GM12878 (cell line): ENCODE measurements at regions of chr15 and their contacts with region 1.

Region 1: GRCh38 chr15:48975472-48976419 is 12.0 kb upstream of the SHC4 start:
- DNase-seq: no peak
- ATAC-seq: peak; percentile 99
- H3K4me3 ChIP-seq: peak overlapping the region; percentile 52; the same call in 1 of the 2 replicates
- H3K27ac ChIP-seq: no peak overlapping the region
- H3K4me1 ChIP-seq: no peaks in the 10 kb centered on the region
- H3K27me3 ChIP-seq: no peaks in the 10 kb centered on the region
- CTCF ChIP-seq: peak; percentile 74 to 93 (median 76)
- EP300 ChIP-seq: no peak
- POLR2A ChIP-seq: peak; percentile 23; the same call in 1 of the 2 replicates
- RAD21 ChIP-seq: peak; percentile 54

Region 2: DNA sequence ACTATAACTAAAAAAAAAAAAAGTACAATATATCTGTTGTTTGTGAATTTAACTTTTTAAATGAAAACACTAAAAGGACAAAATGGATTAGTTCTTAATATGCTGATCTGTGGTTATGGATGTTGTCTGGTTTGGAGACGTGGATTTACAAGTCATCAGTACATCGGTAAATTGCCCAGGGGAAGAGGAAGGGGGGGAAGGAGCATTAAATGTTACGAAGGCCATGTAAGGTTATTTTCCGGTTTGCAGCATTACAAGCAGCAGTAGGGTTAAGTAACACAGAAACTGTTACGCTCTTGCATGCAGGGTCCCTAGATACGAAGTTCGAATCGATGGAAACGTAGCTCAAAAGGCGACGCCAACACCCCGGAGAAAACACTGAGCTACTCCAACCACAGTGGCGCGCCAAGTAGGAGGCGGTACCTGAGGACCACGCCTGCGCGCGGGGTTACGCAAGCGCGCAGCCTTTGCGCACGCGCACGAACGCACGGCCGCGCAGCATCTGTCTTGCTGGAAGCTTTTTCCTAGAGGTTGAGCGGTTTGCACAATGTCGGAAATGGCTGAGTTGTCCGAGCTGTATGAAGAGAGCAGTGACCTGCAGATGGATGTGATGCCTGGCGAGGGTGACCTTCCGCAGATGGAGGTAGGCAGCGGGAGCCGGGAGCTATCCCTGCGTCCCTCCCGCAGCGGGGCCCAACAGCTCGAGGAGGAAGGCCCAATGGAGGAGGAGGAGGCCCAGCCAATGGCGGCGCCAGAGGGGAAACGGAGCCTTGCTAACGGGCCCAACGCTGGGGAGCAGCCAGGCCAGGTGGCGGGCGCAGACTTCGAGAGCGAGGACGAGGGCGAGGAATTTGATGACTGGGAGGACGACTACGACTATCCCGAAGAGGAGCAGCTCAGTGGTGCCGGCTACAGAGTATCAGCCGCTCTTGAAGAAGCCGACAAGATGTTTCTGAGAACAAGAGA is 97.8 kb before region 1 on chr15 and contains the start of gene EID1:
- CTCF ChIA-PET with region 1: interaction called, 38 read pairs
- POLR2A ChIA-PET with region 1: interaction called, 7 read pairs
- RAD21 ChIA-PET with region 1: interaction called, 25 read pairs
- SMC1A ChIA-PET with region 1: interaction called, 14 read pairs
- in situ Hi-C with region 1: no loop called
- intact Hi-C with region 1: no loop called
- DNase-seq: peak; percentile 87
- ATAC-seq: peak; percentile 94
- H3K4me3 ChIP-seq: peak within 1 kb of the TSS; percentile 67
- H3K27ac ChIP-seq: peak within 1 kb of the TSS; percentile 85
- H3K4me1 ChIP-seq: peaks cover 4% of the 10 kb centered on the region
- H3K27me3 ChIP-seq: no peaks in the 10 kb centered on the region
- CTCF ChIP-seq: no peak
- EP300 ChIP-seq: peak in 1 of 2 experiments; percentile 40; a peak in 1 of 4 replicates
- POLR2A ChIP-seq: peak; percentile 98
- RAD21 ChIP-seq: no peak
- polyA plus RNA-seq, gene EID1: 45.6 to 79.5 TPM

Region 3: DNA sequence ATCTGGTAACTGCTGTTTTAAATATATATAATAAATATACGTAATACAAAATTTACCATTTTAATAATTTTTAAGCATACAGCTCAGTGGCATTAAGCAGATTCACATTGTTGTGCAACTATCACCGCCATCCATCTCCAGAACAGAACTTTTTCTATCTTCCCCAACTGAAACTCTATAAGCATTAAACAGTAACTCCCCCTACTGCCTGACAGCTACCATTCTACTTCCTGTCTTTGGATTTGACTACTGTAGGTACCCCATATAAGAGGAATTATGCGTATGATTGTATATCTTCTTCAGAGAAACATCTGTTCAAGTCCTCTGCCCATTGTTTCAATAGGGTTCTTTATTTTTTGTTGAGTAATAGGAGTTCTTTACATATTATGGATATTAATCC is 61.0 kb before region 1 on chr15:
- CTCF ChIA-PET with region 1: interaction called, 7 read pairs
- POLR2A ChIA-PET with region 1: no interaction called
- RAD21 ChIA-PET with region 1: interaction called, 3 read pairs
- SMC1A ChIA-PET with region 1: interaction called, 4 read pairs
- in situ Hi-C with region 1: no loop called
- intact Hi-C with region 1: loop called (anchors 5 kb)
- DNase-seq: no peak
- ATAC-seq: 0 out of 3 replicates have a peak, but pooled peaks have one; percentile 22
- H3K4me3 ChIP-seq: no peak overlapping the region
- H3K27ac ChIP-seq: no peak overlapping the region
- H3K4me1 ChIP-seq: no peaks in the 10 kb centered on the region
- H3K27me3 ChIP-seq: no peaks in the 10 kb centered on the region
- CTCF ChIP-seq: no peak; a peak in 1 of 6 replicates
- EP300 ChIP-seq: no peak
- POLR2A ChIP-seq: no peak
- RAD21 ChIP-seq: no peak

Region 4: DNA sequence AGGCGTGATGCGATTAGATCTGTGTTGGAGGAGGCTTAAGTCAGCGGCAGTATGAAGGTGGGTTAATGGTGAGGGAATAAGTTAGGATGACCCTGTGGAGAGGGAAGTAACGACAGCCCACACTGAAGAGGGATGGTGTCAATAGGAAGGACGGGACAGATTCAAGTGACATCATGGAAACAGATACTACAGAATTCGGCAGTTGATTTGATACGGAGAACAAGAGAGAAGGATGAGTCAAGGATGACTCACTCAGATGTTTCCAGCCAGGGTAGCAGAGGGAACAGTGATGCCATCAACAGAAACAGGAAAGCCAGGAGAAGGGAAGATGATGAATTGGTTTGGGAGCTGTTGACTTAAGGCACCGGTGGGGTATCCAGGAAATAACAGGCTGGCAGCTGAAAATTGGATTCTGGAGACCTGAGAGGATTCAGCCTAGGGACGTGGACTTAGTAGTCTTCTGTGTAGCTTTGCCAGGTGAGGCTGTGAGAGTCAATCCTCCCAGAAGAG is 50.0 kb before region 1 on chr15:
- CTCF ChIA-PET with region 1: interaction called, 10 read pairs
- POLR2A ChIA-PET with region 1: no interaction called
- RAD21 ChIA-PET with region 1: interaction called, 3 read pairs
- SMC1A ChIA-PET with region 1: interaction called, 8 read pairs
- in situ Hi-C with region 1: no loop called
- intact Hi-C with region 1: no loop called
- DNase-seq: no peak
- ATAC-seq: no peak
- H3K4me3 ChIP-seq: no peak overlapping the region
- H3K27ac ChIP-seq: no peak overlapping the region
- H3K4me1 ChIP-seq: no peaks in the 10 kb centered on the region
- H3K27me3 ChIP-seq: no peaks in the 10 kb centered on the region
- CTCF ChIP-seq: no peak
- EP300 ChIP-seq: no peak
- POLR2A ChIP-seq: no peak
- RAD21 ChIP-seq: no peak

Region 5: GRCh38 chr15:48946088-48946839 is 29.5 kb before region 1 on chr15:
- CTCF ChIA-PET with region 1: interaction called, 21 read pairs
- POLR2A ChIA-PET with region 1: no interaction called
- RAD21 ChIA-PET with region 1: interaction called, 4 read pairs
- SMC1A ChIA-PET with region 1: interaction called, 6 read pairs
- in situ Hi-C with region 1: no loop called
- intact Hi-C with region 1: no loop called
- DNase-seq: no peak
- ATAC-seq: peak; percentile 78
- H3K4me3 ChIP-seq: no peak overlapping the region
- H3K27ac ChIP-seq: no peak overlapping the region
- H3K4me1 ChIP-seq: no peaks in the 10 kb centered on the region
- H3K27me3 ChIP-seq: no peaks in the 10 kb centered on the region
- CTCF ChIP-seq: no peak
- EP300 ChIP-seq: no peak
- POLR2A ChIP-seq: no peak
- RAD21 ChIP-seq: no peak

Region 6: DNA sequence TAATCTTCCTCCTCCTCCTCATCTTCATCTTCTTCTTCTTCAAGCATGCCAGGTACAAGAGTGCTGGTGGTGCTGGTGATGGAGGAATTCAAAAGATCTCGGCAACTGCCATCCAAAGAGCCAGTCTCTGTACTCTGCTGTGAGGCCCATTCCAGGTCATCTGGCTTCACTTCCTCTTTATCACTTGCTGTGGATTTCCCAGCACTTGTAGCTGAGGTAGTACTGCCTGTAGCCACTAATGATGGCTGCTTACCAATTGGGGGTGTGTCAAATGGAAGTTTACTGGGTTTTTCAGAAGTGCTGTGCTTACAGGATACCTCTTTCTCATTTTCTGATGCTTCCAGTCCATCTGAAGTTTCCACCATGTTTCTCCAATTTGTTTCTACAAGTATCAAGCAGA is 16.8 kb after region 1 on chr15:
- CTCF ChIA-PET with region 1: interaction called, 13 read pairs
- POLR2A ChIA-PET with region 1: no interaction called
- RAD21 ChIA-PET with region 1: interaction called, 13 read pairs
- SMC1A ChIA-PET with region 1: interaction called, 20 read pairs
- in situ Hi-C with region 1: no loop called
- intact Hi-C with region 1: no loop called
- DNase-seq: peak; percentile 17
- ATAC-seq: peak; percentile 99
- H3K4me3 ChIP-seq: no peak overlapping the region
- H3K27ac ChIP-seq: no peak overlapping the region
- H3K4me1 ChIP-seq: peaks cover 3% of the 10 kb centered on the region; the same call in 1 of the 2 replicates
- H3K27me3 ChIP-seq: no peaks in the 10 kb centered on the region
- CTCF ChIP-seq: no peak
- EP300 ChIP-seq: no peak; a peak in 1 of 4 replicates
- POLR2A ChIP-seq: no peak
- RAD21 ChIP-seq: 0 out of 2 replicates have a peak, but pooled peaks have one; percentile 4

Region 7: GRCh38 chr15:49145651-49146609 is 170.2 kb after region 1 on chr15:
- CTCF ChIA-PET with region 1: interaction called, 13 read pairs
- POLR2A ChIA-PET with region 1: no interaction called
- RAD21 ChIA-PET with region 1: interaction called, 8 read pairs
- SMC1A ChIA-PET with region 1: interaction called, 5 read pairs
- in situ Hi-C with region 1: no loop called
- intact Hi-C with region 1: no loop called
- DNase-seq: no peak
- ATAC-seq: peak; percentile 75
- H3K4me3 ChIP-seq: no peak overlapping the region
- H3K27ac ChIP-seq: no peak overlapping the region
- H3K4me1 ChIP-seq: no peaks in the 10 kb centered on the region
- H3K27me3 ChIP-seq: no peaks in the 10 kb centered on the region
- CTCF ChIP-seq: peak; percentile 59 to 64 (median 63); a peak in 5 of 6 replicates
- EP300 ChIP-seq: no peak
- POLR2A ChIP-seq: no peak
- RAD21 ChIP-seq: peak; percentile 57